GM12878 (cell line): ENCODE measurements at regions of chr2 and their contacts with region 1.

Region 1: GRCh38 chr2:25822190-25823117 is 55.8 kb downstream of the ASXL2 start:
- DNase-seq: no peak
- ATAC-seq: peak; percentile 64
- H3K4me3 ChIP-seq: peak overlapping the region; percentile 27; the same call in 1 of the 2 replicates
- H3K27ac ChIP-seq: 0 out of 2 replicates have a peak overlapping the region, but pooled peaks have one; percentile 26
- H3K4me1 ChIP-seq: peaks cover 9% of the 10 kb centered on the region
- H3K27me3 ChIP-seq: no peaks in the 10 kb centered on the region
- CTCF ChIP-seq: no peak
- EP300 ChIP-seq: no peak
- POLR2A ChIP-seq: peak; percentile 52; the same call in 1 of the 2 replicates
- RAD21 ChIP-seq: no peak

Region 2: GRCh38 chr2:25586726-25587144 is 235.7 kb before region 1 on chr2:
- CTCF ChIA-PET with region 1: no interaction called
- POLR2A ChIA-PET with region 1: no interaction called
- RAD21 ChIA-PET with region 1: no interaction called
- SMC1A ChIA-PET with region 1: no interaction called
- in situ Hi-C with region 1: no loop called
- intact Hi-C with region 1: no loop called
- DNase-seq: peak; percentile 92
- ATAC-seq: peak; percentile 93
- H3K4me3 ChIP-seq: no peak overlapping the region
- H3K27ac ChIP-seq: peak overlapping the region; percentile 41; the same call in 1 of the 2 replicates
- H3K4me1 ChIP-seq: peaks cover 38% of the 10 kb centered on the region
- H3K27me3 ChIP-seq: no peaks in the 10 kb centered on the region
- CTCF ChIP-seq: no peak
- EP300 ChIP-seq: peak; percentile 90 to 91
- POLR2A ChIP-seq: 0 out of 2 replicates have a peak, but pooled peaks have one; percentile 20
- RAD21 ChIP-seq: no peak; the same call in 1 of the 2 replicates

Region 3: DNA sequence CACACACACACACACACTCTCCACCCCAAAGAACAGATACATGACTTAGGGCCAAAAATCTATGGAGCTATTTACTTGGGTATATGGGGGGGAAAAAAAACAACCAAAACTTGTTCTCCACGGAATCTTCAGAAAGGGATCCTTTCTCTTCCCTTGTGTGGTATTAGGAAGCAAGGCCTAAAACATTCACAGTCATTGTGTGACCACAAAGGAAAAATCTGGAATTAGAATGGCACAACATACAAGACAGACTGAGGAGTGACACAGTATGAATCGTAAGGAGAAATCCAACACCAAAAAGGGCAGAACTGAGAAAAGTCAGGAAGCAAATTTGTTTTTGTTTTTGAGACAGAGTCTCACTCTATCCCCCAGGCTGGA is 14.5 kb before region 1 on chr2:
- CTCF ChIA-PET with region 1: interaction called, 6 read pairs
- POLR2A ChIA-PET with region 1: interaction called, 4 read pairs
- RAD21 ChIA-PET with region 1: no interaction called
- SMC1A ChIA-PET with region 1: interaction called, 10 read pairs
- in situ Hi-C with region 1: no loop called
- intact Hi-C with region 1: no loop called
- DNase-seq: no peak
- ATAC-seq: no peak
- H3K4me3 ChIP-seq: no peak overlapping the region
- H3K27ac ChIP-seq: no peak overlapping the region
- H3K4me1 ChIP-seq: no peaks in the 10 kb centered on the region
- H3K27me3 ChIP-seq: no peaks in the 10 kb centered on the region
- CTCF ChIP-seq: no peak
- EP300 ChIP-seq: no peak
- POLR2A ChIP-seq: no peak
- RAD21 ChIP-seq: no peak